ENCODE measurements at regions of chr17 and their contacts with region 1.

Region 1: GRCh38 chr17:1724506-1725362 is at the start of gene WDR81:
- DNase-seq: peak; percentile 91 to 99
- H3K4me3 ChIP-seq: peak within 1 kb of the TSS; percentile 84
- CTCF ChIP-seq: no peak
- POLR2A ChIP-seq: no peak
- total RNA-seq, gene WDR81: 42.9 to 64.4 (median 49.2) TPM

Region 2: DNA sequence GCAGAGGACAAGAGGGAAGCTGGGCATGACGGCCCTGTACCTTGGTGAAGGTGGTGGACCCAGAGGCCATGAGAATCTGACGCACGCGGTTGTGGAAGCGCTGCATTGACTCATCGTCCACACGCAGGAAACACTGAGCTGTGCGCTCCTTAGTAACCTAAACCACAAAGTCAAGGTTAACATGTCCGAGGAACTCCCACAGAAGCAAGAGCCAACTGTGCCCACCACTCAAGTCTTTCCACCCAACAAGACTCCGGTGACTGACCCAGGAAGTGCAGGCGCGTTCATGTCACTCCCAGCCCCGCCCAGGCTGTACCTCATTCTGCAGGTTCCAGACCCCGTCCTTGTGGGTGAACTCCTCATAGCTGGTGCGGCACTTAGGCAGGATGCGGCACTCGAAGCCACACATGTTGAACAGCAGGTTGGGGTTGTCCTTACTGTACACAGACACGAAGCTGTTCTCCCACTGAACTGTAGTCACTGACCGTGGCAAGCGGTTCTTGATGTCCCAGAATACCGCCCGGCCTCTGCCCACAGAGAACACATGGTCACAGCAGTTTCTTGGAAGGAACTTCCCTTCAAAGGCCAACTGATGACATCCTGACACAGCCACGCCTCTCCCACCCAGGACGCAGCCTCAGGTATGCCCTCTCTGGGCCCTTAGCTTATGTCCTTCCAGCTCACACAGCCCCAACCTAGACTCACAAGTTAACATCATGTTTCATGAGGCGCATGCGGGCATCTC is 51.5 kb before region 1 on chr17:
- intact Hi-C with region 1: no loop called
- DNase-seq: no peak
- H3K4me3 ChIP-seq: no peak overlapping the region
- CTCF ChIP-seq: no peak
- POLR2A ChIP-seq: no peak

Region 3: GRCh38 chr17:1783834-1784611 is 59.3 kb after region 1 on chr17:
- intact Hi-C with region 1: loop called (anchors 5 kb)
- DNase-seq: peak; percentile 93 to 97
- H3K4me3 ChIP-seq: no peak overlapping the region
- CTCF ChIP-seq: peak in 1 of 3 donors; percentile 82
- POLR2A ChIP-seq: peak in 1 of 2 donors; percentile 52

Region 4: DNA sequence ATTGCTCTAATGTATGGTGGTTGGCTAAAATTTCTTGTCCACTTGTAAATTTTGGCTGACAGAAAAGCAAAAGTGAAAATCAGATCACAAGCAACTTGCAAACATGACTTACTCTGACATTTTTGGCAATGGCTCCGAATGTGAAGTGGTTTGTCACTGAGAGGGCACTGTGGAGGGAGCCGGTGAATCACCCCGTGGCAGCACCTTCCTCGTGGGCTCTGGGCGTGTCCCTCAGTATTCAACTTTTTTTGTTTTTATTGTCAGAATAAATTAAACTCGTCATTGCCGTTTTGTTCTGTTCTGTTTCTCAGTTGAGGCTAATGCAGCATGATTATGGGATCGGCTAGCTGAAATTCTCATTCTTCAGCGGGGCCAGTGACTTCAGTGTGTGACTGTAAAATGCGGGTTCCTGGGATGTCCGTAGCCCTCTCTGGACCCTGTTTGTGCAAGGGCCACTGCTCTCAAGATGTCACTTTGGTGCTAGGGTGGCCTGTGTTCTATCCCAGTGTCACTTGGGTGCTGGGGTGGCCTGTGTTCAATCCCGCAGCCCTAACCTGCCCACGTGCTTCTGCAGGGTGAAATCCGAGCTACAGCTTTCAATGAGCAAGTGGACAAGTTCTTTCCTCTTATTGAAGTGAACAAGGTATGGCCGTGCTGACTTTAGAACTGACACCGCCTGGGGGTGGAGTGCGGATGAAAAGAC is 153.8 kb after region 1 on chr17:
- intact Hi-C with region 1: loop called (anchors 10 kb)
- DNase-seq: no peak
- H3K4me3 ChIP-seq: no peak overlapping the region
- CTCF ChIP-seq: no peak
- POLR2A ChIP-seq: no peak

Measured in lower leg skin (tissue), 4 donors.